ENCODE measurements at regions of chr11 and their contacts with region 1.

Region 1: DNA sequence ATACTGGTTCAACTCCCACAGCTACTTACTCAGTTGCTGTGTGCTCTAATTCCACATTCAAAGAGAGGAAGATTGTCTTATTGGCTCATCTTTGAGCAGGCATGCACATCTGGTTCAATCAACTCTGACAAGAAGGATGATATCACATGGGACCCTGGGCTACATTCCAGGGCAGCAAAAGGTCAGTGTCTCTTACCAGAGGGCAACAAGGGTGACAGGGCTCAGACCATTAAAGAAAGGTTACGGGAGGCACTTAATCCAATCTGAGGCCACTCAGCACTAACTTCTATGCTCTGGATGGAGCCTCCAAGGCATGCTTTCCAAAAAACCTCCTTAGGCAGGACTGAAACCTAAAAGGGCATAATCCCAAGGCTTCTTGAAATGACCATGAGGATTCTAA is 549.4 kb upstream of the API5 start:
- DNase-seq: no peak
- H3K4me3 ChIP-seq: no peak overlapping the region
- H3K27ac ChIP-seq: no peak overlapping the region
- H3K4me1 ChIP-seq: no peaks in the 10 kb centered on the region
- H3K27me3 ChIP-seq: no peaks in the 10 kb centered on the region
- CTCF ChIP-seq: no peak
- EP300 ChIP-seq: no peak
- POLR2A ChIP-seq: no peak

Region 2: GRCh38 chr11:42444406-42444805 is 317.9 kb before region 1 on chr11:
- intact Hi-C with region 1: loop called in 1 of 4 experiments (anchors 5 kb)
- DNase-seq: no peak
- H3K4me3 ChIP-seq: no peak overlapping the region
- H3K27ac ChIP-seq: no peak overlapping the region
- H3K4me1 ChIP-seq: no peaks in the 10 kb centered on the region
- H3K27me3 ChIP-seq: no peaks in the 10 kb centered on the region
- CTCF ChIP-seq: no peak
- EP300 ChIP-seq: no peak
- POLR2A ChIP-seq: no peak

Measured in ovary (tissue), 10 donors.